ENCODE measurements at regions of chr15 and their contacts with region 1.

Region 1: DNA sequence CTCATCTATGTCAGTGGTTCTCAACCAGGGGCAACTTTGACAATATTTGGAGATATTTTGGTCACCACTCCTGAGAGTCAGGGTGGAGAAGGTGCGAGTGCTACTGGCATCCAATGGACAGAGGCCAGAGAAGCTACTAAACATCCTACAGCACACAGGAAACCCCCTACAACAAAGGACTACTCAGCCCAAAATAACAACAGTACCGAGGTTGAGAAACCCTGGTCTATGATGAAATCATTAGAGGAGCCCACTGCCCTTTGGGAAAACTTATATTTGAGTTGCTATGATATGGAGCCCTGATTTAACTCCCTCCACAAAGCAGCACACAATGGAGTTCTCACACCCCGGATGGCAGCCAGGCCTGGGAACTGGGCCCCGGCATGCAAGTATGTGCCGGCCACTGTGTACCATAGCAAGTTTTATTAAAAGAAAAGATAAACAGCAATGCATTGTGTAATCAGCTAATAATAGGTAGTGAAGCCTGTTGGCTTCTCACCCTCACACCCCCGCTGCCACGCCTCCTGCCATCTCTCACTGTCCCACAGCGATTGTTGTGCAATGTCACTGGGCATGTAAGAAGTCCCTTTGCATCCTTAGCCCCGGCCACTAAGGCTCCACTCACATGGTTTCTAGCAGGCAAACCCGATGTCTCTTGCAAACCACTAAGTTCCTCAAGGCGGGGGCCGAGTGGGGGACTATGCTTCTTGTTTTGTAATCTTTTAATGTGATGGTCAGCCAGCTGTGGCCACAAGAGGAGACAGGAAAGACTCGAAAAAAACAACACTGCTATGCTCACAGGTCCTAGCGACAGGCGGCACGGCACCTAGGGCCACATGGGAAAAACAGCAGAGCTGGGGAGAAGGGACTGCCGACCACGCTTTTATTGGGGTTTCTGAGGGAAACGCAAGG is 109.9 kb downstream of the AQP9 start:
- DNase-seq: peak; percentile 89

Region 2: DNA sequence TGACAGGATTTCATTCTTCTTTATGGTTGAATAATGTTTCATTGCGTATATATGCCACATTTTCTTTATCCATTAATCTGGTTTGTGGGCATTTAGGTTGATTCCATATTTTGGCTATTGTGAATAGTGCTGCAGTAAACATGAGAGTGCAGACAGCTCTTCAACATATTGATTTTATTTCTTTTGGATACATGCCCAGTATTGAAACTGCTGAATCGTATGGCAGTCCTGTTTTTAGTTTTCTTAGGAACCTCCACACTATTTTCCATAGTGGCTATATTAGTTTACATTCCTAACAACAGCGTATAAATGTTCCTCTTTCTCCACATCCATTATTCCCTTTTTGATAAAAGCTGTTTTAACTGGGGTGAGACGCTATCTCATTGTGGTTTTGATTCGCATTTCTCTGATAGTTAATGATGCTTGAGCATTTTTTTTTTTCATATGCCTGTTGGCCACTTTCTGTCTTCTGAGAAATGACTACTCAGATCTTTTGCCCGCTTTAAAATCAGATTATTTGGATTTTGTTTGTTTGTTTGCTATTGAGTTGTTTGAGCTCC is 88.2 kb before region 1 on chr15:
- intact Hi-C with region 1: no loop called
- DNase-seq: no peak

Region 3: GRCh38 chr15:58201516-58201915 is 46.6 kb before region 1 on chr15:
- intact Hi-C with region 1: no loop called
- DNase-seq: no peak

Region 4: GRCh38 chr15:58260911-58261267 is 12.8 kb after region 1 on chr15:
- intact Hi-C with region 1: loop called (anchors 1 kb)
- DNase-seq: no peak

Measured in cardiac septum (tissue), 1 donor.